PC-3 (cell line): ENCODE measurements at regions of chr3 and their contacts with region 1.

Region 1: DNA sequence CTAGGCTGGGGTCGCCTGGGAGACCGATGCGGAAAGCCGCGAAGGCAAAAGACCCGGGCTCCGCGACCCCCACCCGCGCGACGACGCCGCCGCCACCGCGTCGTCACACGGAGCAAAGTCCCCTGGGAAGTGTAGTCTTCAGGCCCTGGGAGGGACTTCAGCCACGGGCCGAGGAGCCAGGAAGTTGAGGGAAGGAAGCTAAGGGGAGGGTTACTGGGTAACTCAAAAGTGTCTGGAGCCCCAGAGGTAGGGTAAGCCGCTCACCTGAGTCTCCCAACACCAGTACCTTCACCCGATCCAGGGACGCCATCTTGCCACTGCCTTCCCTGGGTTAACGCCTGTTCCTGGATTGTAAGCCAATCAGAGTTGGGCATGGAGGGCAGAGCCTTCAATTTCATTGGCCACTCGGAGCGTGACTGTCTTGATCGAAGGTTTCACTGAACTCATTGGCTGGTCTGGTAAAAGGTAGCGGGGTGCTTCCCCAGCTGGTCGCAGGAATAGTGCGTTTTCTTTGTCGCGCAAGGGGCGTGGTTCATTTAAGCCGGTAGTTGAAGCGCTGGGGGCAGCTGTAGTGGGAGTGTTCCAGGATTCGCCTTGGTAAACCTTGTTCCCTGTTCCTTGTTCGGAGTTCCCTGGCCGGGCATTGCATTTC is at the starts of genes GTF2E1 and RABL3:
- DNase-seq: peak; percentile 100
- ATAC-seq: peak; percentile 98
- H3K4me3 ChIP-seq: peak within 1 kb of the TSS; percentile 93
- H3K27ac ChIP-seq: peak within 1 kb of the TSS; percentile 79
- H3K4me1 ChIP-seq: peaks cover 16% of the 10 kb centered on the region
- H3K27me3 ChIP-seq: no peaks in the 10 kb centered on the region
- CTCF ChIP-seq: no peak
- total RNA-seq, gene GTF2E1: 10.7 and 15.2 TPM in 2 replicates
- total RNA-seq, gene RABL3: 21.3 and 24.3 TPM in 2 replicates

Region 2: GRCh38 chr3:120596116-120596852 is 146.0 kb before region 1 on chr3 and contains the start of gene NDUFB4:
- CTCF ChIA-PET with region 1: no interaction called
- POLR2A ChIA-PET with region 1: no interaction called
- intact Hi-C with region 1: loop called (anchors 1 kb)
- DNase-seq: peak; percentile 100
- ATAC-seq: peak; percentile 98
- H3K4me3 ChIP-seq: peak within 1 kb of the TSS; percentile 93
- H3K27ac ChIP-seq: peak within 1 kb of the TSS; percentile 68
- H3K4me1 ChIP-seq: peaks cover 19% of the 10 kb centered on the region
- H3K27me3 ChIP-seq: no peaks in the 10 kb centered on the region
- CTCF ChIP-seq: no peak
- total RNA-seq, gene NDUFB4: 239 and 283 TPM in 2 replicates

Region 3: DNA sequence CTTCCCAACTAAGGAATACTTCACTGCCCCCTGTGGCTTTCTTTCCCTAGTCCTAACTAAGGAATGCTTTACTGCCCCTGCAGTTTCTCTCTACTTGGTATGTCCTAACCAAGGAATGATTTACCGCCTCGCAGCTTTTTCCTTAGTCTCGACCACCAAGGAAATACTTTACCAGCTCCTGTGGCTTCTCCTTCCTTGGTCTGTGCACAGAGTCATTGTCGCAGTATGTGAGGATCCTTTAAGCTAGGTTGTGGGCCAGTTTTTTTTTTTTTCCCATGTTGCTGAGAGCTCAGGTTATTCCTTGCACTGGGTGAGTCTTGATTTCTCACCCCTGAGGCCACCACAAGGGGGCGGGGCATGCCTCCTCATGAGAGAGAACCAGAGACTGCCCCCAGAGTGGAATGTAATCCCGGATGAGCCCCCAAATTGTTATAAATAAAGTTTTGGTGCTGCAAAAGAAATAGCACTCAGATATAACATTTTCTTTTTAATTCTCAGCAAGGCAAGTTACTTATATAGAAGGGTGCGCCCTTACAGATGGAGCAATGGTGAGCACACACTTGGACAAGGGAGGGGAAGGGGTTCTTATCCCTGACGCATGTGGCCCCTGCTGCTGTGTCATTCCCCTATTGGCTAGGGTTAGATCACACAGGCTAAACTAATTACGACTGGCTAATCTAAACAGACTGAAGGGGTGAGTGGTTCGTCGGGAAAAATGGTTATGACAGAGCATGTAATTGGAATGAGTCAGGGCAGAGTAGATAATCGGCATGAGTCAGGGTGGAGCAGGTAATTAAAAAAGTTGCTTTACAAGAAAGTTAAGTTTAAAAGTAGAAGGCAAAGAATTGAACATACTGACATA is 119.2 kb before region 1 on chr3:
- CTCF ChIA-PET with region 1: no interaction called
- POLR2A ChIA-PET with region 1: no interaction called
- intact Hi-C with region 1: loop called (anchors 1 kb)
- DNase-seq: peak; percentile 98
- ATAC-seq: peak; percentile 94
- H3K4me3 ChIP-seq: peak overlapping the region; percentile 16
- H3K27ac ChIP-seq: peak overlapping the region; percentile 90
- H3K4me1 ChIP-seq: peaks cover 28% of the 10 kb centered on the region
- H3K27me3 ChIP-seq: no peaks in the 10 kb centered on the region
- CTCF ChIP-seq: peak; percentile 81

Region 4: GRCh38 chr3:120693439-120694186 is 48.7 kb before region 1 on chr3:
- CTCF ChIA-PET with region 1: no interaction called
- POLR2A ChIA-PET with region 1: interaction called, 5 read pairs
- intact Hi-C with region 1: loop called (anchors 1 kb)
- DNase-seq: peak; percentile 83
- ATAC-seq: peak; percentile 97
- H3K4me3 ChIP-seq: no peak overlapping the region
- H3K27ac ChIP-seq: peak overlapping the region; percentile 47
- H3K4me1 ChIP-seq: peaks cover 9% of the 10 kb centered on the region
- H3K27me3 ChIP-seq: no peaks in the 10 kb centered on the region
- CTCF ChIP-seq: no peak

Region 5: GRCh38 chr3:120705851-120706582 is 36.3 kb before region 1 on chr3:
- CTCF ChIA-PET with region 1: no interaction called
- POLR2A ChIA-PET with region 1: no interaction called
- intact Hi-C with region 1: loop called (anchors 1 kb)
- DNase-seq: peak; percentile 36
- ATAC-seq: peak; percentile 87
- H3K4me3 ChIP-seq: no peak overlapping the region
- H3K27ac ChIP-seq: peak overlapping the region; percentile 39
- H3K4me1 ChIP-seq: no peaks in the 10 kb centered on the region; the same call in 1 of the 2 replicates
- H3K27me3 ChIP-seq: no peaks in the 10 kb centered on the region
- CTCF ChIP-seq: no peak

Region 6: GRCh38 chr3:120763601-120764000 is 21.3 kb after region 1 on chr3:
- CTCF ChIA-PET with region 1: no interaction called
- POLR2A ChIA-PET with region 1: no interaction called
- intact Hi-C with region 1: loop called (anchors 1 kb)
- DNase-seq: no peak
- ATAC-seq: no peak
- H3K4me3 ChIP-seq: no peak overlapping the region
- H3K27ac ChIP-seq: no peak overlapping the region
- H3K4me1 ChIP-seq: peaks cover 20% of the 10 kb centered on the region
- H3K27me3 ChIP-seq: no peaks in the 10 kb centered on the region
- CTCF ChIP-seq: no peak

Region 7: GRCh38 chr3:120795017-120795648 is 52.8 kb after region 1 on chr3:
- CTCF ChIA-PET with region 1: interaction called, 3 read pairs
- POLR2A ChIA-PET with region 1: interaction called, 3 read pairs
- intact Hi-C with region 1: loop called (anchors 1 kb)
- DNase-seq: peak; percentile 93
- ATAC-seq: peak; percentile 65
- H3K4me3 ChIP-seq: no peak overlapping the region
- H3K27ac ChIP-seq: 0 out of 2 replicates have a peak overlapping the region, but pooled peaks have one; percentile 3
- H3K4me1 ChIP-seq: peaks cover 28% of the 10 kb centered on the region
- H3K27me3 ChIP-seq: no peaks in the 10 kb centered on the region
- CTCF ChIP-seq: peak; percentile 99